Dendritic cell treated with granulocyte-macrophage colony-stimulating factor and Interleukin-4, amounts not matched to agents 40 ng/mL and 50 ng/mL, for 4 days (primary cell): ENCODE measurements at regions of chr4 and their contacts with region 1.

Region 1: DNA sequence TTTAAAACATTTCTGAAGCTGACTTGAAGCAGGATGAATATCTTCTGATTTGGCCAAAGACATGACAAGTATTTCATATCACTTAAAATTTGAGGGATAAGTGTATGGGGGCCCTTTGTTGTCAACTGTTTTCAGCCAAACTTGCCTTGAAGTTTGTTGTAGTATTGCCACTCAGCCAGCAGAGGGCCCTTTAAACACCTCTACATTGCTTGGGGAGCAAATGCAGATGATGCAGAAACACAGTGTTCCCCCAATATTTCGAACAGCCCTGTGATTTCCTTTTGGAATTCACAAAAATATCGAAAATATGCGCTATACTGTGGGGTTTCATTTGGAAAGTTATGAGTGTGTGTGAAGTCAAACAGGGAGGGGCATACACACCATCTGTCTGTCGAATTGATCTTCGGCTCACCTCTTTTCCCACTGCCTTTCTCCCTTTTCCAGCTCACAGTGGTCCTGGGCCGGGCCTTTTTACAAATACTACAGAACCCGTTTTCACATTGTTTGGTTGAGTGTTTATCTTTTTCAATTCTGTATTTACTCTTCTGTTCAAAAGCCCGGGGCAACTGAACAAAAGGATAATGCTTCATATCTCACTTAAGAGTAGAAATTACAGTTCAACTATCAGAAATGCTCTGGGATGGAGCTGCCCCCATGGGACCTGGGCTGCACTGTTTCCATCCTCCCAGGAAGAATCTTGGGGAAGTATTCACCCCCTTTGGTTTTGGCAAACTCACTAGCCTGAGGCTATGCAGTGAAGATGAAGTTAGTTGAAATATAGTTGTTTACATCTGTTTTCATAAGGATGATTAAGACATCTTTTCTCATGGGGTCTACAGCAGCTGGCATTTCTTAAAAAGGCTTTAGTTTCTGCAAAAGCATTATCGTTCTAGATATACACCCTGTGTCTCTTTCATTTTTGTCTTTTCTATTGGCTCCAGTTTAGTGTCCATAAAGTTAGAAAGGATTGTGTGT is 137.6 kb downstream of the EGF start:
- H3K4me3 Mint-ChIP-seq: no peak overlapping the region
- H3K27ac Mint-ChIP-seq: no peak overlapping the region
- H3K4me1 Mint-ChIP-seq: no peaks in the 10 kb centered on the region
- H3K27me3 Mint-ChIP-seq: peaks cover 79% of the 10 kb centered on the region

Region 2: DNA sequence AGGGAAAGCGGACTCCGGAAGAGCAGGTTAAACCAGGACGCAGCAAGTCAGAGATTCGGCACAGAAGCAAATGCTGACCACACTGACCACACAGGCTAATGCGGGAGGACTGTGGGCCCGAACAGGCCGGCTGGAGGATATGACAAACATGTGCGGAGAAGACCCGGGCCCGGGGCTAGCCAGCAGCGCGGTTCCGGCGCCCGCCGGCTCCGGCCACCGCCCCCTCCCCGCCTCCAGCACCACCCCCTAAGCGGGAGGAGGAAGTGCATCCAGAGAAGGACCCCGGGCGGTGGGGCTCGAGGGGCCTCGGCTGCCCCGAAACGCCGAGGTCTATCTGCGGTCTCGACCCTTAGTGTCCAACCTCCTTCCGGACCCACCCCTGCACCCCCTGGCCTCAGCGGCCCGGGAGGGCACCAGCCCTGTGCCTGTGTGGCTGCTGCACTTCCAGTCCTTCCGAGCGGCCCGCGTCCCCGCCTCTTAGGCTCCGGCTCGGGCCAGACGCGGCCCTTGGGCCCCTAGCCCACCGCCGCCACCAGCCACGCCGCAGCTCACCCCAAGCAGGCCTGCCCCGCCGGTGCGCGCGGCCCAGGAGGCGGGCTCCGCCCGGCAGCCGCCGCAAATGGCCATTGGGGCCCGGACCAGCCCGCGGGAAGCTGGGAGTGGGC is 146.1 kb after region 1 on chr4:
- intact Hi-C with region 1: loop called (anchors 5 kb)
- H3K4me3 Mint-ChIP-seq: peak overlapping the region; percentile 88
- H3K27ac Mint-ChIP-seq: no peak overlapping the region
- H3K4me1 Mint-ChIP-seq: peaks cover 29% of the 10 kb centered on the region
- H3K27me3 Mint-ChIP-seq: peaks cover 48% of the 10 kb centered on the region

Region 3: DNA sequence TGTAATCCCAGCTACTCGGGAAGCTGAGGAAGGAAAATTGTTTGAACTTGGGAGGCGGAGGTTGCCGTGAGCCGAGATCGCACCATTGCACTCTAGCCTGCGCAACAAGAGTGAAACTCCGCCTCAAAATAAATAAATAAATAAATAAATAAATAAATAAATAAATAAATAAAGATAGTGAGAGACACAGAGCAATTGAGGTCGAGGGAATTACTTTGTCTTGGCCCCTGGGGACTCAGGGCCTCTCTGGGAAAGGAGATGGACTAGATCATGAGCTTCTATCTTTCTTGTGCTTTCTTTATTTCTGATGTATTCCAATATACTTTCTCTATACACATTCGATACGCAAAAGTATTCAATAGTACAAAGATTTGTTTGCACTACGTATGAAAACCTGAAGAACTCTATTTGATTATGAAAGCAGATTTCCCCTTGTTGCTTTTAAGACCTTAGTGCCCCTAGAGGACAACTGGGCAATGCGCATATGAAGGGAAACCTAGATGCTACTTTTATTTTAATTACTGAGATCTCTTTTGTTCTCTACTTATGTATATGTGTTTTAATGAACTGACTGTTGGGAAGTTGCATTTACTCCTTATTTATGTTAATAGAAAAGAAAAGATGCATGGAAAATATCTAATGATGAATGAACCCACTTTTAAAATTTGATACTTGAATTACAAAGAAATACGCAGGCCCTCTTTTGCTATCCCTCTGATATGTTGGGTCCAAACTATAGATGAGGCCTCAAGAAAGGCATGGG is 160.9 kb after region 1 on chr4:
- intact Hi-C with region 1: loop called (anchors 1 kb)
- H3K4me3 Mint-ChIP-seq: no peak overlapping the region
- H3K27ac Mint-ChIP-seq: no peak overlapping the region
- H3K4me1 Mint-ChIP-seq: no peaks in the 10 kb centered on the region
- H3K27me3 Mint-ChIP-seq: peaks cover 44% of the 10 kb centered on the region